Activated naive CD4-positive, alpha-beta T cell treated with anti-CD3 and anti-CD28 coated beads for 36 hours (primary cell): ENCODE measurements at regions of chr10 and their contacts with region 1.

Region 1: DNA sequence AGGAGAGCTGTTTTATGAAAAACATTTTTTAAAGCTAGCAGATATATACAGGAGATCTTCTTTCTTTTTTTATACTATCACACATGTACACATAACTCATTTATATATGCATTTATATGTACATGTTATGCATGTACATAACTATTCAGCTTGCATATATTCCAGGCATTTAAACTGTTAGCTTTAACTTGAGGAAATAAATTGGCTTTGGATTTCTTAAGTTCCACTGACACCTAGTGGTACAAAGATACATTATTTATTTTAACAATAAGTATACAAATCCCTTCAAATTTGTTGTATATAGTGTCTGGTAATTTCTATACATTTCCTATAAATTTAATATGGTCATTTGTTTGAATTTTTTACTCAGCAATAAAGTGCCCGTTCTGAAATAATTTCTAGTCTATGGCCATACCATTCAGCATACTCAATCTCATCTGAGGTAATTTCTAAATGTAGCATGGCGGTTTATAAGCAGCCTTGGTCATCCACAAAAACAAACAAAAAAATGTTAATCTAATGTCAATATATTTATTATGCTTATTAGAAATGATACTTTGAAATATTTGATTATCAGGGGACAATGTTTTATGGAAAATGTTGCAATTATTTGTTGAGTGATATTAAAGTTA is 11.6 kb downstream of the ZDHHC6 start:
- DNase-seq: no peak
- H3K4me3 Mint-ChIP-seq: no peak overlapping the region
- H3K27ac Mint-ChIP-seq: no peak overlapping the region
- H3K4me1 Mint-ChIP-seq: peaks cover 2% of the 10 kb centered on the region
- H3K27me3 Mint-ChIP-seq: no peaks in the 10 kb centered on the region

Region 2: GRCh38 chr10:112327678-112328077 is 107.4 kb before region 1 on chr10:
- CTCF ChIA-PET with region 1: interaction called, 16 read pairs
- intact Hi-C with region 1: no loop called
- DNase-seq: no peak
- H3K4me3 Mint-ChIP-seq: no peak overlapping the region
- H3K27ac Mint-ChIP-seq: no peak overlapping the region
- H3K4me1 Mint-ChIP-seq: peaks cover 4% of the 10 kb centered on the region
- H3K27me3 Mint-ChIP-seq: peaks cover 4% of the 10 kb centered on the region

Region 3: DNA sequence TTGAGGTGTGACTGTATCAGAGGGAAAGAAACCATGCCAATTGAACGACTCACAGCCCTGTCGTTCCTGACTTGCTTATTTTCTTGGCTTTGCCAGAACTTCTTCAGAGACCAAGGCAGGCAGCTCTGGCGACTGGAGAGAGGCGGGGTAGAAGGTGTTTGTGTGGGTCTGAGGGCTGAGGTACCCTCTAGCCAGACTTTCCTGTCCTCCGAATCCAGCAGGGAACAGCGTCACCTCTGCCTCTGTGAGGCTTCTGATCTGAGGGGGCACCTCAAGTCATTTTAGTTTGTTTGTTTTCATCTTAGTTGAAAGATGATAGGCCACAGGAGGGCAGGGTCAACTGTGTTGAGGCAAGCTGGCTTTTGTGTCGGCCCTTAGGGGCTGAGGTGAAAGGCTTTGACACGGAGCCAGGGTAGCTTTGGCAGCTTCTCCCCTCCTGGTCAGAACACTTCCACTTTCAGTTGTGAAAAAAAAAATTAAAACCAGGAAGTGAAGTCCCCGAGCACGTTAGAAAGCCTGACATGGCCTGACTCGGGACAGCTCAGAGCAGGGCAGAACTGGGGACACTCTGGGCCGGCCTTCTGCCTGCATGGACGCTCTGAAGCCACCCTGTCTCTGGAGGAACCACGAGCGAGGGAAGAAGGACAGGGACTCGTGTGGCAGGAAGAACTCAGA is 59.2 kb before region 1 on chr10:
- CTCF ChIA-PET with region 1: interaction called, 4 read pairs
- intact Hi-C with region 1: loop called (anchors 1 kb)
- DNase-seq: peak; percentile 49
- H3K4me3 Mint-ChIP-seq: peak overlapping the region; percentile 97
- H3K27ac Mint-ChIP-seq: peak overlapping the region; percentile 99
- H3K4me1 Mint-ChIP-seq: peaks cover 55% of the 10 kb centered on the region
- H3K27me3 Mint-ChIP-seq: no peaks in the 10 kb centered on the region